K562 (cell line): ENCODE measurements at regions of chr7 and their contacts with region 1.

Region 1: DNA sequence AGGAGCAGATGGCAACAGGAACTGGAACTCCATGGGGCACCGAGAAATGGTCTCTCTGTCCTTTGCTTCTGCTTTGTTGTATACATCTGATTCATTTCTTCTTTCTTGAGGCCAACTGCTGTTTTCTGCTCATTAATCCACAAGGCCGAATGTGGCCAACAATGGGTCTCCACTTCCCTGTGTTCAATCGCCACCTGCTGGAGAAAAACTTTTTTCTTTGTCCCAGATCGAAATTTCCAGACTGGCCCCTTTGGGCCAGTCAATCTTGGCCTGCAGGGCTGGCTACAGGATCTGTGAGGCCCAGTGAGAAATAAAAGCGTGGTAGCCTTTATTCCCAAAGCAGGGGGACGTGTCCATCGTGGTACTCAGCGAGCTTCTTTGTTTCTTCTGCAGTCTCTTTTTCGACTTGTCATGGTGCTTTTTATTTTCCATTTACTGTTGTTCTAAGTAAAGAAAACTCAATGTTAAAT is 58.8 kb downstream of the PARP12 start:
- DNase-seq: peak; percentile 81 to 84 (median 84)
- ATAC-seq: peak; percentile 73
- H3K4me3 ChIP-seq: no peak overlapping the region
- H3K27ac ChIP-seq: no peak overlapping the region
- H3K4me1 ChIP-seq: peaks cover 10 to 11% of the 10 kb centered on the region in 2 experiments; a peak in 4 of 5 replicates
- H3K27me3 ChIP-seq: peaks cover 0 to 9% of the 10 kb centered on the region in 2 experiments; a peak in 2 of 5 replicates
- CTCF ChIP-seq: peak; percentile 85 to 92 (median 88)
- EP300 ChIP-seq: no peak
- POLR2A ChIP-seq: no peak
- RAD21 ChIP-seq: peak; percentile 83 to 94

Region 2: DNA sequence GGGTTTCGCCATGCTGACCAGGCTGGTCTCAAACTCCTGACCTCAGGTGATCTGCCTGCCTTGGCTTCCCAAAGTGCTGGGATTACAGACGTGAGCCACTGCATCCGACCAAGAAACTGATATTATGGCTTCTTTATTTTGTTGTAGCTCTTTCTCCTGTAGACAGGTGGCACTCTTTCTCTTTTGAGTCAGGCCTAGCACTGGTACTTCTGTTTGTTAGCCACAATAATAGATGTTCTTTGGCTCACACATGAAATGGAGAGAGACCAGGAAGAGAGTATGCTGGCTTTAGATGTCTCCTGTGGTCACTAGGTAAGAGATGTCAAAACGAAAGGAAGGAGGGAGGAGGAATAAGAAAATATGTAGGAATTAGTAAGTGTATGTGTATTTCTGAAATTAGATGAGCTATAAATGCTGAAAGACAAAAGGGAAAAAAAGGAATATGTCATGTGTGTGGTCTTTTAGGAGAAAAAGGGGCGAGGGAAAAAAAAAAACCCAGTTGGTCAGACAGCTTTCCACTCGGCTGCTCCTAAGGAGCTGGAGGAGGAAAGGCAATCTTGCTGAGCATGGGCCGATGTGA is 401.7 kb before region 1 on chr7:
- CTCF ChIA-PET with region 1: interaction called, 22 read pairs
- POLR2A ChIA-PET with region 1: interaction called, 6 read pairs
- in situ Hi-C with region 1: no loop called
- intact Hi-C with region 1: loop called (anchors 1 kb)
- DNase-seq: peak; percentile 53 to 65 (median 60)
- ATAC-seq: peak; percentile 93
- H3K4me3 ChIP-seq: no peak overlapping the region
- H3K27ac ChIP-seq: no peak overlapping the region
- H3K4me1 ChIP-seq: peaks cover 0 to 9% of the 10 kb centered on the region in 2 experiments; a peak in 3 of 5 replicates
- H3K27me3 ChIP-seq: no peaks in the 10 kb centered on the region
- CTCF ChIP-seq: peak; percentile 68 to 81 (median 69)
- EP300 ChIP-seq: no peak
- POLR2A ChIP-seq: no peak
- RAD21 ChIP-seq: peak; percentile 80 to 89

Region 3: DNA sequence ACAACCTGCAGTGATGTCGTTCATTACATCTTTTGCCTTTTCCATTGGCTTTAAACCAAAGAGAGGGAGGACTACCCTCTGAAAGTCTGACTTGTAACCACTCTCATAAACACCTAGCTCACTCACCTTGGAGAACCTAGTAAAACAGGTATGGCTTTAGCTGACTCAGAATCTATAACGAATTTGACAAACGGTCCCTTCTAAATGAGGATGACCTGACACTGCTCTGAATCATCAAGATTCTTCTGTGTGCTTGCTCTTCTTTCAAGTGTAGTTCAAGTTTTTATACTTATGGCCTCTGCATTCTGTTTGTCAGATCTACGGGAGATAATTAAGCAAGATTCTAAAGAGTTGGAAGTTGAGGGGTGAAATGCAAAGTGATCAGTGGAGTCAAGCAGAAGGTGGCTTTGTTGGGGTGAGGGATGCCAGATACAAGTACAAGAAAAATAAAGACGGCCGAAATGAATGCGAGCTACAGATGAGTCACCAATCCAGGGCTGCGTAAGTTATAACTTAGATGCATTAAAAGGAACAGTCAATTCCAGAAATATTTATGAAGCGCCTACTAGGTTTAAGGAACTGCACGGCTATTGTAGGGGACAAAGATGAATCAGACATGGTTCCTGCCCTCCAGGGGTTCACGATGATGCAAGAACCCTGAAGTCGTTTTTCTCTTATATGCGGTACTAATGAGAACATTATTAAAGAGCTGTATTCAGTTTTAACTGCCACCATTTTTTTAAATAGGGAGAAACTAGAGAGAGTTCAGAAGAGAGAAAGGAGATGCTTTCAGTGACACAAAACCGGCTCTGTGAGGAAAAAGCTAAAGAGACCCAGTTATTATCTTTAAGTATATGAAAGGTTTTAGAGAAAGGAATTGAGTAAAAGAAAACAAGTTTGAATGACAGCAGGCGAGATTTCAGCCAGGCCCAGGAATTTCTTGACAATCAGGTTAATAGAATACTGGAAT is 232.7 kb before region 1 on chr7:
- CTCF ChIA-PET with region 1: interaction called, 17 read pairs
- POLR2A ChIA-PET with region 1: no interaction called
- in situ Hi-C with region 1: loop called (anchors 5 kb)
- intact Hi-C with region 1: loop called (anchors 1 kb)
- DNase-seq: no peak
- ATAC-seq: no peak
- H3K4me3 ChIP-seq: no peak overlapping the region
- H3K27ac ChIP-seq: no peak overlapping the region
- H3K4me1 ChIP-seq: peaks cover 3 to 8% of the 10 kb centered on the region in 2 experiments; a peak in 4 of 5 replicates
- H3K27me3 ChIP-seq: no peaks in the 10 kb centered on the region; a peak in 1 of 5 replicates
- CTCF ChIP-seq: no peak
- EP300 ChIP-seq: no peak
- POLR2A ChIP-seq: no peak
- RAD21 ChIP-seq: no peak

Region 4: GRCh38 chr7:139915864-139916716 is 87.9 kb before region 1 on chr7:
- CTCF ChIA-PET with region 1: no interaction called
- POLR2A ChIA-PET with region 1: no interaction called
- in situ Hi-C with region 1: no loop called
- intact Hi-C with region 1: loop called (anchors 5 kb)
- DNase-seq: peak; percentile 93 to 99 (median 95)
- ATAC-seq: peak; percentile 87
- H3K4me3 ChIP-seq: no peak overlapping the region
- H3K27ac ChIP-seq: peak overlapping the region; percentile 85
- H3K4me1 ChIP-seq: peaks cover 28 to 69% of the 10 kb centered on the region in 2 experiments
- H3K27me3 ChIP-seq: no peaks in the 10 kb centered on the region
- CTCF ChIP-seq: no peak
- EP300 ChIP-seq: peak; percentile 92
- POLR2A ChIP-seq: peak; percentile 60
- RAD21 ChIP-seq: peak; percentile 1 to 17; a peak in 2 of 4 replicates

Region 5: GRCh38 chr7:140304191-140304799 is 300.3 kb after region 1 on chr7:
- CTCF ChIA-PET with region 1: interaction called, 4 read pairs
- POLR2A ChIA-PET with region 1: no interaction called
- in situ Hi-C with region 1: no loop called
- intact Hi-C with region 1: loop called (anchors 2 kb)
- DNase-seq: peak in 3 of 4 experiments; percentile 44 to 72 (median 72)
- ATAC-seq: peak; percentile 89
- H3K4me3 ChIP-seq: no peak overlapping the region
- H3K27ac ChIP-seq: no peak overlapping the region
- H3K4me1 ChIP-seq: no peaks in the 10 kb centered on the region
- H3K27me3 ChIP-seq: no peaks in the 10 kb centered on the region
- CTCF ChIP-seq: peak; percentile 66 to 90 (median 68)
- EP300 ChIP-seq: no peak
- POLR2A ChIP-seq: no peak
- RAD21 ChIP-seq: peak; percentile 91